Dendritic cell treated with granulocyte-macrophage colony-stimulating factor and Interleukin-4, amounts not matched to agents 40 ng/mL and 50 ng/mL, for 4 days (primary cell): ENCODE measurements at regions of chrX and their contacts with region 1.

Region 1: GRCh38 chrX:30713061-30713525 is 59.9 kb downstream of the GK start:
- H3K4me3 Mint-ChIP-seq: no peak overlapping the region
- H3K27ac Mint-ChIP-seq: peak overlapping the region; percentile 30
- H3K4me1 Mint-ChIP-seq: peaks cover 7% of the 10 kb centered on the region
- H3K27me3 Mint-ChIP-seq: no peaks in the 10 kb centered on the region

Region 2: DNA sequence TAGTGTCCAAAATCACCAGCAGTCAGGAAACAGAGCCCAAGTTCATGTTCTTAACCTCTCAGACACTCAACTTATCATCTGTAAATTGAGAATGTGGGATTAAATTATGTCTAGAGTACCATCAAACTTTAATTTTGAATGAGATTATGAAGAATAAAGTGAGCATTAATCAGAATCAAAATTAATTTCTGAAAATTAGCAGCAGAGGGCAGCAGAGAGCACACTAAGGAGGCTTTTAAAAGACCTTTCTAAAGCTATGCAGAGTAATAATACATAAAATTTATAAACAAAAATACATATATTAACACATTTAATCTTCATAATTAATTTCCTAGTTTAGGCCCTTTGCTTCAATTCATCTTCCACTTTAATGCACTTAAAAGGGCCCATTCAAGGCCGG is 142.6 kb before region 1 on chrX:
- intact Hi-C with region 1: loop called (anchors 5 kb)
- H3K4me3 Mint-ChIP-seq: peak overlapping the region; percentile 82
- H3K27ac Mint-ChIP-seq: peak overlapping the region; percentile 81
- H3K4me1 Mint-ChIP-seq: peaks cover 40% of the 10 kb centered on the region
- H3K27me3 Mint-ChIP-seq: no peaks in the 10 kb centered on the region

Region 3: DNA sequence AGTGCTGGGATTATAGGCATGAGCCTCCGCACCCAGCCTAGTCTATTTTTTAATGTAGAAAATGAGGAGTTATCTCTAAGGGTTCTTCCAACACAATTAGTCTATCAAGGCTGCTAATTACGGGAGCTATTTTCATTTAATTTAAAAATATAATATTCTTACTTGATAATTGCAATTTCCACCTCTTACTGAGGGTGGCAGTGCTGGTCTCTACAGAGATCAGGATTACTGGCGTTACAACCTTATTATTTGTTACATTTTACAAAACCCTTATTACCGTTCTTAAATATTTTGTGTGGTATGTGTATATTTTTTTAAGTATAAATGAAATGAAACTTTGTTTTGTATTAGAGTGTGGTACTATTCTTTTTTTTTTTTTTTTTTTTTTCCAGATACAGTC is 77.5 kb before region 1 on chrX:
- intact Hi-C with region 1: loop called (anchors 2 kb)
- H3K4me3 Mint-ChIP-seq: no peak overlapping the region
- H3K27ac Mint-ChIP-seq: no peak overlapping the region
- H3K4me1 Mint-ChIP-seq: peaks cover 13% of the 10 kb centered on the region
- H3K27me3 Mint-ChIP-seq: no peaks in the 10 kb centered on the region